Ovary (tissue), 10 donors: ENCODE measurements at regions of chr6 and their contacts with region 1.

Region 1: DNA sequence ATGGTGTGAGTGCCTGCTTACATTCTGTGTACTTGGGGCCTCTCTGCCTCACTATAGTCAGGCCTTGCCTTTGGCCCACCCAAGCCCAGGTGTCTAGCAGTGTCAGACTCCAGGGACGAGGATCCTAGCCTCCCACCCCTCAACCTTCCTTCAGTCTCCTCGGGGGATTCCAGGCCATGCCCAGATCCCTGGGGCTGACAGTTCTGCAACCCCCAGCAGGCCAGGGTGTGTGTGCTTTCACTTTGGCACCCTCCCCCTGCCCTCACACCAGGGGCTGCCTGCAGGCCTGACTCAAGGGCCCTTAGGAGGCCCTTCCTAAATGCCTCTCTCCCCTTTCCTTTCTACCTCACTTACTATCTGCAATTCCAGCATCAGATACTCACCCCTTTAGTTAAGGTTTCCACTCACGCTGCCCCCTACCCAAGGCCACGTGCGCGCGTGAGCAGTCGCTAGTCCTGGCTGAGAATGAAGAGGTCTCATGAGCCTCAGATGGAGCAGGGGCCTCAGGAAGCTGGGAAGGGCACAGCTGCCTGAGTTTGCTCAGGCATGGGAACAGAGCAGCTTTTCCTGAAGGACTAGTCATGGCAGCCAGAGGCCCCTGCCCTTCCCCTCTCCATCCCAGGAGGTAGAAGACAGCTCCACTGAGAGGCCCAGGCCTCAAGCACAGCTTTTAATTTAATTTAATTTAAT is 859 bp upstream of the CLPS start:
- DNase-seq: no peak
- H3K4me3 ChIP-seq: no peak overlapping the region
- H3K27ac ChIP-seq: no peak overlapping the region
- H3K4me1 ChIP-seq: no peaks in the 10 kb centered on the region
- H3K27me3 ChIP-seq: no peaks in the 10 kb centered on the region
- CTCF ChIP-seq: no peak
- EP300 ChIP-seq: no peak
- POLR2A ChIP-seq: no peak

Region 2: DNA sequence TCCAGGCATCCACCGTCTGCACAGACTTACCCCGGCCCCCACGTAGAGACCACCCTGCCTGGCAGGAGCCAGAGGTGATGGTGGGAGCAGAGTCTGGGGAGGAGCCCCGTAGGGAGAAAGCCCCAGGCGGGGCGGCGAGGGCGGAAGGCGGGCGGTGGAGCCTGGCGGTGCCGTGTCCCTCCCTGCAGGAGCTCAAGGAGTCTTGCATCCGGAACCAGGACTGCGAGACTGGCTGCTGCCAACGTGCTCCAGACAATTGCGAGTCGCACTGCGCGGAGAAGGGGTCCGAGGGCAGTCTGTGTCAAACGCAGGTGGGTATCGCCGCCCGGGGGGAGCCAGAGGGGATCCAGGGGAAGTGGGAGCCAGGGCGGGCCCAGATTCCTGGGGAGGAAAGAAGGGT is 11.2 kb before region 1 on chr6:
- intact Hi-C with region 1: loop called in 2 of 4 experiments (anchors 1 kb)
- DNase-seq: no peak
- H3K4me3 ChIP-seq: no peak overlapping the region
- H3K27ac ChIP-seq: no peak overlapping the region
- H3K4me1 ChIP-seq: no peaks in the 10 kb centered on the region
- H3K27me3 ChIP-seq: no peaks in the 10 kb centered on the region
- CTCF ChIP-seq: no peak
- EP300 ChIP-seq: no peak
- POLR2A ChIP-seq: no peak